Calu3 (cell line): ENCODE measurements at regions of chr17 and their contacts with region 1.

Region 1: GRCh38 chr17:40664582-40665333 is at the start of gene KRT222:
- DNase-seq: no peak
- H3K4me3 Mint-ChIP-seq: peak within 1 kb of the TSS; percentile 46
- H3K27ac Mint-ChIP-seq: no peak within 1 kb of the TSS
- H3K4me1 Mint-ChIP-seq: peaks cover 19% of the 10 kb centered on the region
- H3K27me3 Mint-ChIP-seq: peaks cover 86% of the 10 kb centered on the region
- CTCF ChIP-seq: no peak
- total RNA-seq, gene KRT222: not detected in 2 replicates

Region 2: GRCh38 chr17:40588552-40588951 is 76.2 kb before region 1 on chr17:
- CTCF ChIA-PET with region 1: no interaction called
- intact Hi-C with region 1: no loop called
- DNase-seq: no peak
- H3K4me3 Mint-ChIP-seq: no peak overlapping the region
- H3K27ac Mint-ChIP-seq: no peak overlapping the region
- H3K4me1 Mint-ChIP-seq: no peaks in the 10 kb centered on the region
- H3K27me3 Mint-ChIP-seq: peaks cover 81% of the 10 kb centered on the region
- CTCF ChIP-seq: no peak

Region 3: GRCh38 chr17:40678902-40679522 is 14.3 kb after region 1 on chr17:
- CTCF ChIA-PET with region 1: interaction called, 14 read pairs
- intact Hi-C with region 1: no loop called
- DNase-seq: no peak
- H3K4me3 Mint-ChIP-seq: no peak overlapping the region
- H3K27ac Mint-ChIP-seq: no peak overlapping the region
- H3K4me1 Mint-ChIP-seq: peaks cover 6% of the 10 kb centered on the region
- H3K27me3 Mint-ChIP-seq: peaks cover 85% of the 10 kb centered on the region
- CTCF ChIP-seq: no peak

Region 4: DNA sequence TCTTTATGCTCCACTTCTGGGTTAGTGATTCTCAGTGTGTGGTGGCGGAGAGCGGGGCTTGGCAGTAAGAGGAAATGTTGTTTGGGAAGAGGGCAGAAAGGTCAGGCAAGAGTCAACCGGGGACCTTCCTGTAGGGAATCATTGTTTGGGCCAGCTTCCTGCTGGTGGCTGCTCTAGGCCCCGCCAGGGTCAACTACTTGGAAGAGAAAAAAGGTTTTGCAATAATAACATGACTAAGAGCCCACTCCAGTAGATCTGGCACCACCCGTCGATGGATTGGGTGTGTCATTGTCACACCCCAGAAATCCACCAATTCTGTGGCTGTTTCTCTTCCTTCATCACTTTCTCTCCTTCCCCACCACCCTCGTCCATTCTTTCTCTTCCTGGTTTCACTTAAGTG is 43.0 kb after region 1 on chr17:
- CTCF ChIA-PET with region 1: interaction called, 22 read pairs
- intact Hi-C with region 1: no loop called
- DNase-seq: peak; percentile 92
- H3K4me3 Mint-ChIP-seq: no peak overlapping the region
- H3K27ac Mint-ChIP-seq: peak overlapping the region; percentile 14
- H3K4me1 Mint-ChIP-seq: peaks cover 36% of the 10 kb centered on the region
- H3K27me3 Mint-ChIP-seq: peaks cover 14% of the 10 kb centered on the region
- CTCF ChIP-seq: no peak